CD8-positive, alpha-beta T cell (primary cell): ENCODE measurements at regions of chr6 and their contacts with region 1.

Region 1: DNA sequence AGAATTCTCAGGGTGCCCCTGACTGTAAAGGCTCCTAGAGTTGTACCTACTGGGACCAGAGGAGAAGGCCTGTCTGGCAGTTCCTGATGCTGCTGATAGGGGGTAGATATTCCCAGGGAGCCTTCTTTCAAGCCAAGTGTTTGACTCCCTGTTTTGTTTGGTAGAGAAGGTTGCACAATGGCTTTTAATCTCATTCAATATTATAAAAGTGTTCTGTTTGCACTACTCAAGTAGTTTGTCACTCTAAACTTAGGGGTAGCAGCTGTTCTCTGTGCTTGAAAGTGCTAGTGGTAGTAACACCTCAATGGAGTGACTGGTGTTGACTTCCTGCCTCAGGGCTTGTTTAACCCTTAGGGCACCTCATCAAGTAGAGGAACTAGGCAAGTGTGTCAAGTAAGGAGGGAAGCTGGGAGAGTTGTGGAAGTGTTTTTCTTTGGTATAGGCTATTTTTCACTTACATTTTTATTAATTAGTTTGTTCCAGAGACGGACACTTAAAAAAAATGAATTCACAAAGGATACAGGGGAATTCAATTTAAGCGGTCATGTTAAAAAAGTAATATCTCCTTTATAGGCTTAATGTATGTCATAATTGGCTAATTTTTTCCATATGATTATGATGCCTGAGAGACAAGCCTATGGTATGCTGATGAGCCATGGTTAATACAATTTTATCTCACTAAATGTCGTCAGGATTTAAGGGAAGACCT is 38.1 kb downstream of the BICRAL start:
- DNase-seq: peak in 4 of 9 experiments; percentile 7 to 61 (median 34)
- ATAC-seq: peak; percentile 85
- H3K4me3 ChIP-seq: no peak overlapping the region
- H3K4me3 Mint-ChIP-seq: no peak overlapping the region
- H3K27ac ChIP-seq: peak overlapping the region in 1 of 2 experiments; percentile 33
- H3K27ac Mint-ChIP-seq: peak overlapping the region; percentile 66
- H3K4me1 ChIP-seq: peaks cover 13% of the 10 kb centered on the region
- H3K4me1 Mint-ChIP-seq: peaks cover 35% of the 10 kb centered on the region
- H3K27me3 ChIP-seq: no peaks in the 10 kb centered on the region
- H3K27me3 Mint-ChIP-seq: no peaks in the 10 kb centered on the region
- CTCF ChIP-seq: no peak

Region 2: GRCh38 chr6:42782622-42783176 is 37.3 kb before region 1 on chr6:
- CTCF ChIA-PET with region 1: no interaction called
- POLR2A ChIA-PET with region 1: interaction called, 4 read pairs
- intact Hi-C with region 1: loop called in 1 of 2 experiments (anchors 5 kb)
- DNase-seq: peak; percentile 62 to 90 (median 78)
- ATAC-seq: peak; percentile 53
- H3K4me3 ChIP-seq: peak overlapping the region; percentile 74 to 98
- H3K4me3 Mint-ChIP-seq: peak overlapping the region; percentile 96
- H3K27ac ChIP-seq: peak overlapping the region; percentile 100
- H3K27ac Mint-ChIP-seq: peak overlapping the region; percentile 100
- H3K4me1 ChIP-seq: peaks cover 46% of the 10 kb centered on the region
- H3K4me1 Mint-ChIP-seq: peaks cover 26% of the 10 kb centered on the region
- H3K27me3 ChIP-seq: no peaks in the 10 kb centered on the region
- H3K27me3 Mint-ChIP-seq: no peaks in the 10 kb centered on the region
- CTCF ChIP-seq: no peak

Region 3: DNA sequence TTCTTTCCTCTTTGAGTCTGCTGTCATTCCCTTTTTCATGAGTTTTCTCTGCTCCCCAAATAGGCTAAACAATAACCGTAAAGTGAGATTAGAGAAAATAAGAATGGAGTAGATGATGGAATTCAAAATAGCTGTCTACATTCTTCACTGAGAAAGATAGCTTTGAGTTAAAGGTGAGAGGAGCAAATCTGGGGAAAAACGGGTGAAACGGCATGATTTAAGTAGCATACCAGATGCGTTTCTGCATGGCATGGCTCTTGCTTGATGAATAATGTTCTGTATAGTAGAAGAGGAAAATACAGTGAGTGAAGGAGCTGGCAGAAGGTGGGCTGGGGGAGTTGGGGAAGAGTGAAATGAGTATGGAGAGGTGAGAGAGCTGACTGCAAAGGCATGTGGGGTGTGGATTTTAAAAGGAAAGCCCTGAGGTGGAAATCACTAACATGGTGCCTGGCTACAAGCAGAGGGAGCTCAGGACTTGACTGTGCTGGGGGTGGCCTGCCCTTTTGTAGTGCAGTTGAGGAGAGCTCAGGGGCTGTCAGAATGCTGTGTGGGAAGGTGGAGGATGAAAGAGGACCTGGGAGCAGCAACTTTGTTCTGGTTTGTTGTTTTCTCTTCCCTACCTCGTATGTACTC is 29.3 kb before region 1 on chr6:
- CTCF ChIA-PET with region 1: no interaction called
- POLR2A ChIA-PET with region 1: interaction called, 4 read pairs
- intact Hi-C with region 1: loop called in 1 of 2 experiments (anchors 2 kb)
- DNase-seq: peak in 1 of 9 experiments; percentile 45
- ATAC-seq: no peak
- H3K4me3 ChIP-seq: no peak overlapping the region
- H3K4me3 Mint-ChIP-seq: peak overlapping the region; percentile 4
- H3K27ac ChIP-seq: peak overlapping the region; percentile 10 to 51
- H3K27ac Mint-ChIP-seq: peak overlapping the region; percentile 83
- H3K4me1 ChIP-seq: peaks cover 54% of the 10 kb centered on the region
- H3K4me1 Mint-ChIP-seq: peaks cover 39% of the 10 kb centered on the region
- H3K27me3 ChIP-seq: no peaks in the 10 kb centered on the region
- H3K27me3 Mint-ChIP-seq: no peaks in the 10 kb centered on the region
- CTCF ChIP-seq: no peak